ENCODE measurements at regions of chr10 and their contacts with region 1.

Region 1: DNA sequence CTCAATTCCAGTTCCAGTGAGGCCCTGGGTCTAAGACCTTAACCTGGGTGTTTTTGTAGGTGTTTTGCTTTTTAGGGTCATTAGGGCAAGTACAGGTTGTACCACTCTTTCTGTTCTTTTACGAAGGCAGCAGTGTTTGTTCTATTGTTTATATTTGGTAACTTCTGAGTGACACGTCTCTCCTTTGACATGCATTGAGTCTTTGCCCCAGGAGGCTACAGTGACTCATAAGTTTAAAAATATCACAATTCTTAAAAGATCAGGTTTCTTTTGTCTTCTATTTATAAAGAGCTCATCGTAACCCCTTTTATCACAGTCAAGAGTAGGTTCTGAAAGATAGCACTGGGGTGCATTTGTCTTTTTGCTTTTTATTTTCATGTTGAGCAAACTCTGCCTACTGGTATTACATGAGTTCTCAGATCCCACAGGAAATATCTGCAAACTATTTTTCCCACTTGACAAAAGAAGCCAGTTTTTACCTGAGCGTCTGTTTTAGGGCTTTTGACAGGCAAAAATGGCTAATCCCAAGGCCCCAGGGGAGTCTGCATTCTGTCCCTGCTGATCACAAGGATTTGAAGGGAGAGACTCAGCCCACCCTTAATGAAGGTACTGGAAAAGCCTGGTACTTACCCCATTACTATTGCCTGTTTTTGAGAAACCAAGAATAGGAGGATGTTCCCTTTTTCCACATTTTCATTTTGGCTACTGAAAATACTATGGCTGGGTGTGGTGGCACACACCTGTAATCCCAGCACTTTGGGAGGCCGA is 7.9 kb downstream of the NUDT13 start:
- DNase-seq: peak in 1 of 2 experiments; percentile 58
- H3K4me3 ChIP-seq: no peak overlapping the region
- H3K4me3 Mint-ChIP-seq: peak overlapping the region; percentile 45
- H3K27ac Mint-ChIP-seq: peak overlapping the region; percentile 45
- H3K4me1 ChIP-seq: peaks cover 26% of the 10 kb centered on the region
- H3K4me1 Mint-ChIP-seq: peaks cover 14% of the 10 kb centered on the region
- H3K27me3 ChIP-seq: no peaks in the 10 kb centered on the region
- H3K27me3 Mint-ChIP-seq: no peaks in the 10 kb centered on the region
- CTCF ChIP-seq: no peak

Region 2: GRCh38 chr10:73131301-73131700 is 13.1 kb after region 1 on chr10:
- CTCF ChIA-PET with region 1: interaction called, 3 read pairs
- POLR2A ChIA-PET with region 1: no interaction called
- intact Hi-C with region 1: loop called (anchors 2 kb)
- DNase-seq: no peak
- H3K4me3 ChIP-seq: no peak overlapping the region
- H3K4me3 Mint-ChIP-seq: no peak overlapping the region
- H3K27ac Mint-ChIP-seq: no peak overlapping the region
- H3K4me1 ChIP-seq: peaks cover 32% of the 10 kb centered on the region
- H3K4me1 Mint-ChIP-seq: peaks cover 20% of the 10 kb centered on the region
- H3K27me3 ChIP-seq: no peaks in the 10 kb centered on the region
- H3K27me3 Mint-ChIP-seq: no peaks in the 10 kb centered on the region
- CTCF ChIP-seq: no peak